ENCODE measurements at regions of chr9 and their contacts with region 1.

Region 1: GRCh38 chr9:34035656-34036055 is 13.0 kb downstream of the UBAP2 start:
- DNase-seq: no peak
- ATAC-seq: no peak

Region 2: DNA sequence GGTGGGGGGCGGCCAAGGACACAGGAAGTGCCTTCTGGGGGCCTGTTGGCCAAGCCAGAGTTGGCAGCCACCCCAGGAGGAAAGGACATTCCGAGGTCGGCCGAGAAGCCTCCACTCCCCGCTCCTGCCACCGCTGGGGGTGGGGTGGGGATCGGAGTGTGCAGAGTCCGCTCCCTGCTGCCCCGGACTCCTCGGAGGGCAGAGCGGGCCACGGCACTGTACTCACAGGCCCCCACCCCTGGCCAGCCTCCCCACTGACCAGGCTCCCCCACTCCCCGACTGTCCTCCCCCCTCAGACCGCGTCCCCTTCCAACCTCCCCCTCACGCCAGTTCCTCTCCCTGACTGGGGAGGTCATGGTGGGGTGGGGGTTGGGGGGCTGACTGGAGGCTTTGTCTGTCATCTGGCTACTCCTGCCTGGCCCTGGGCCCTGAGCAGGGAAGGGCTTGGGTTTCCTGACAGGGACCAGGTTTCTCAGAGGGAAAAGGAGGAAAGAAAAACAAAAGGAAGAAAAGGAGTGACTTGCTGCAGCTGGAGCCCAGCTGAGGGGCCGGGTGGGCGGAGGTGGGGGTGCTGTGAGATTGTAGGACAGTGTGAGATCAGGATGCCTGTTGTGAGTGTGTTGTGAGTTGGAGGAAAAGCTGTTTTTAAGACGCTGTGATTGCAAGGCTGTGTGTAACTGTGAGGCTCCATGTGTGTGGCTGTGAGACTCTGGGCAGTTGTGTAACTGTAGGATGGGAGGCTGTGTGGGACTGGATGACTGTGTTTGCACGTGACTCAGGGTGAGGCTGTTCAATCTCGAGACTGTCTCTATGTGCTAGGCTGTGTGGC is 524.2 kb after region 1 on chr9:
- intact Hi-C with region 1: loop called (anchors 10 kb)
- DNase-seq: no peak
- ATAC-seq: peak; percentile 91